CD14-positive monocyte (primary cell): ENCODE measurements at regions of chr1 and their contacts with region 1.

Region 1: GRCh38 chr1:202952818-202953217 is 5.3 kb downstream of the ADIPOR1 start:
- DNase-seq: peak; percentile 96 to 99 (median 99)
- H3K4me3 ChIP-seq: peak overlapping the region in 2 of 3 experiments; percentile 12 to 55
- H3K4me3 Mint-ChIP-seq: peak overlapping the region; percentile 48 to 80
- H3K27ac ChIP-seq: peak overlapping the region; percentile 80 to 95
- H3K27ac Mint-ChIP-seq: peak overlapping the region; percentile 98 to 99 (median 99)
- H3K4me1 ChIP-seq: peaks cover 52 to 62% of the 10 kb centered on the region in 2 donors
- H3K4me1 Mint-ChIP-seq: peaks cover 62% of the 10 kb centered on the region
- H3K27me3 ChIP-seq: no peaks in the 10 kb centered on the region
- H3K27me3 Mint-ChIP-seq: no peaks in the 10 kb centered on the region
- CTCF ChIP-seq: no peak

Region 2: GRCh38 chr1:202968840-202969295 is 16.1 kb after region 1 on chr1:
- intact Hi-C with region 1: loop called (anchors 2 kb)
- DNase-seq: peak; percentile 96 to 98 (median 97)
- H3K4me3 ChIP-seq: peak overlapping the region in 2 of 3 experiments; percentile 11 to 91
- H3K4me3 Mint-ChIP-seq: peak overlapping the region; percentile 50 to 90
- H3K27ac ChIP-seq: peak overlapping the region; percentile 81 to 91
- H3K27ac Mint-ChIP-seq: peak overlapping the region; percentile 90 to 98 (median 96)
- H3K4me1 ChIP-seq: peaks cover 43 to 51% of the 10 kb centered on the region in 2 donors
- H3K4me1 Mint-ChIP-seq: peaks cover 45% of the 10 kb centered on the region
- H3K27me3 ChIP-seq: no peaks in the 10 kb centered on the region
- H3K27me3 Mint-ChIP-seq: peaks cover 0 to 2% (median 2%) of the 10 kb centered on the region in 3 donors
- CTCF ChIP-seq: peak; percentile 74